ENCODE measurements at regions of chr12 and their contacts with region 1.

Region 1: GRCh38 chr12:7460375-7461259 is 16.7 kb upstream of the CD163L1 start:
- DNase-seq: peak; percentile 53 to 83
- H3K4me3 ChIP-seq: no peak overlapping the region
- H3K27ac ChIP-seq: no peak overlapping the region
- H3K4me1 ChIP-seq: no peaks in the 10 kb centered on the region; a peak in 2 of 7 replicates
- H3K27me3 ChIP-seq: no peaks in the 10 kb centered on the region
- CTCF ChIP-seq: peak; percentile 19 to 91 (median 87)
- EP300 ChIP-seq: no peak
- POLR2A ChIP-seq: no peak
- RAD21 ChIP-seq: peak; percentile 98 to 99

Region 2: DNA sequence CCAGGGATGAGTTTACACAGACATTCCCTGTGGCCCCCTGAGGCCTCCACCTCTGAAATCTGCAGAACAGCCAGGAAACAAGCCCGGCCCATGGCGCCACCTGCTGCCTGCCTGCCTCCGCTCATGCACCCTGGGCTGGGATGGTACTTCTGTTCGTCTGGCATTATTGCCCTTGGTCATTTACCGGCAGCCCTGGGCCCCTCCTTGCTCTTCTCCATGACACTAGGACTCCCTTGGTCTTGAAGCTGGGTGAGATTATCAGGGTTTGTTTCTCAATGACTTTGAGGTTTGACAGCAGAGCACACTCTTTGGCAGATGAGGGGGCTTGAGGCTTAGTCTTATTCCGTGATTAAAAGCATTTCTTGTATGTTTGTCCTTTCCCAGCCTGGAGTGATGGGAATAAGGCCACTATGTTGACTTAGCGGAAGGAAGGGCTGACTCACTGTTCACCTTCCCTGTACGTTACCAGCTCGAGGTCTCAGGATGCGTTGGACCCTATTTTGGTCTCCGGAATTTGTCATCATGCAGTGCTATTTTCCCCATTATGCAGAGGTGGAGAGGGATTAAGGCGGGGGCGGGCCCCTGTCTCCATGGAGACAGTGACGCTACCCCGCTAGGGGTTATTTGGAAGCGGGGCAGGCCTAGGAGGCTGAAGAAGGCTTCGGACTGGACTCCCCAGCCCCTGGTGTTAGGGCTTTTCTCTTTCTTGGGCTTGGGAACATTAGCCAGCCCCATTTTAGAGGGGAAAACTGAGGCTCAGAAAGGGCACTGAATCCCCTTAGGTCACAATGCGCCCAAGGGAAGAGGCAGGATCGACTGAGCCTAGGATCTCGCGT is 271.8 kb before region 1 on chr12:
- CTCF ChIA-PET with region 1: no interaction called
- POLR2A ChIA-PET with region 1: no interaction called
- DNase-seq: peak; percentile 64 to 90
- H3K4me3 ChIP-seq: peak overlapping the region; percentile 62 to 89 (median 83)
- H3K27ac ChIP-seq: no peak overlapping the region
- H3K4me1 ChIP-seq: peaks cover 0 to 13% (median 3%) of the 10 kb centered on the region in 4 experiments; a peak in 4 of 7 replicates
- H3K27me3 ChIP-seq: no peaks in the 10 kb centered on the region
- CTCF ChIP-seq: peak; percentile 91 to 97 (median 94)
- EP300 ChIP-seq: no peak; a peak in 1 of 3 replicates
- POLR2A ChIP-seq: no peak
- RAD21 ChIP-seq: peak; percentile 83 to 86

Region 3: GRCh38 chr12:7219599-7220243 is 240.9 kb before region 1 on chr12:
- CTCF ChIA-PET with region 1: interaction called, 31 read pairs
- POLR2A ChIA-PET with region 1: no interaction called
- DNase-seq: peak; percentile 34 to 69
- H3K4me3 ChIP-seq: no peak overlapping the region
- H3K27ac ChIP-seq: no peak overlapping the region
- H3K4me1 ChIP-seq: peaks cover 0 to 5% (median 3%) of the 10 kb centered on the region in 4 experiments; a peak in 6 of 7 replicates
- H3K27me3 ChIP-seq: no peaks in the 10 kb centered on the region
- CTCF ChIP-seq: peak in 2 of 3 experiments; percentile 94 to 96; a peak in 3 of 4 replicates
- EP300 ChIP-seq: no peak
- POLR2A ChIP-seq: no peak
- RAD21 ChIP-seq: peak; percentile 100

Region 4: DNA sequence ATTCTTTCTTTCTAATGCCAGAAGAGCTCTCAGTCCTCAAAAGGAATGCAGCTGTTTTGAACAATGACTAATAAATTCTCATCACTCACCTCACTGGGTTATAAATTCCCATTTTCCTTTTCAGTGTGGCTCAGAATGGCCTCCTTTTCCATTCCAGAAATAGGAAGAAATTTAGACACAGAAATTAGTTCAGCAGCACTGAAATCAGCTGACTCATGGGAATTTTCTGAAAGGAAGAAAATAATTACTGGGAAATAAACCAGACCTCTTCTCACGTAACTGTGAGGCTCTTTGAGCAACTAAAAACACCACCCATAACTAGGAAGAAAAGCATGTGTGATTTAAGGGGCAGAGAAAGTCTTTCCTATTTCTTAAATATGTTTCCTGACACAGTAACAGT is 19.2 kb after region 1 on chr12:
- CTCF ChIA-PET with region 1: interaction called, 10 read pairs
- POLR2A ChIA-PET with region 1: no interaction called
- DNase-seq: no peak
- H3K4me3 ChIP-seq: no peak overlapping the region
- H3K27ac ChIP-seq: no peak overlapping the region
- H3K4me1 ChIP-seq: no peaks in the 10 kb centered on the region
- H3K27me3 ChIP-seq: no peaks in the 10 kb centered on the region
- CTCF ChIP-seq: no peak
- EP300 ChIP-seq: no peak
- POLR2A ChIP-seq: no peak
- RAD21 ChIP-seq: no peak

Measured in H1 (cell line).